A549 (cell line): ENCODE measurements at regions of chr2 and their contacts with region 1.

Region 1: GRCh38 chr2:230712443-230713330 is at the start of gene CAB39:
- DNase-seq: peak; percentile 70 to 86
- ATAC-seq: peak; percentile 91 to 95
- H3K4me3 ChIP-seq: peak within 1 kb of the TSS; percentile 83
- H3K27ac ChIP-seq: peak within 1 kb of the TSS; percentile 84 to 99
- H3K4me1 ChIP-seq: peaks cover 16% of the 10 kb centered on the region; the same call in 2 of the 3 replicates
- CTCF ChIP-seq: peak; percentile 86
- EP300 ChIP-seq: no peak; a peak in 1 of 5 replicates
- POLR2A ChIP-seq: peak; percentile 58
- RAD21 ChIP-seq: peak; percentile 32 to 61; a peak in 4 of 5 replicates
- polyA plus RNA-seq, gene CAB39: 50.7 and 54.2 TPM in 2 replicates

Region 2: GRCh38 chr2:230688490-230688889 is 24.2 kb before region 1 on chr2:
- CTCF ChIA-PET with region 1: interaction called, 3 read pairs
- POLR2A ChIA-PET with region 1: interaction called, 12 read pairs
- DNase-seq: no peak
- ATAC-seq: no peak
- H3K4me3 ChIP-seq: no peak overlapping the region
- H3K27ac ChIP-seq: peak overlapping the region in 1 of 2 experiments; percentile 53; a peak in 1 of 6 replicates
- H3K4me1 ChIP-seq: peaks cover 53% of the 10 kb centered on the region
- CTCF ChIP-seq: no peak
- EP300 ChIP-seq: no peak
- POLR2A ChIP-seq: no peak
- RAD21 ChIP-seq: no peak